ENCODE measurements at regions of chr17 and their contacts with region 1.

Region 1: GRCh38 chr17:42112552-42113176 is at the start of gene DHX58:
- DNase-seq: peak; percentile 79

Region 2: GRCh38 chr17:41724476-41725050 is 388.1 kb before region 1 on chr17:
- in situ Hi-C with region 1: no loop called
- DNase-seq: no peak

Region 3: DNA sequence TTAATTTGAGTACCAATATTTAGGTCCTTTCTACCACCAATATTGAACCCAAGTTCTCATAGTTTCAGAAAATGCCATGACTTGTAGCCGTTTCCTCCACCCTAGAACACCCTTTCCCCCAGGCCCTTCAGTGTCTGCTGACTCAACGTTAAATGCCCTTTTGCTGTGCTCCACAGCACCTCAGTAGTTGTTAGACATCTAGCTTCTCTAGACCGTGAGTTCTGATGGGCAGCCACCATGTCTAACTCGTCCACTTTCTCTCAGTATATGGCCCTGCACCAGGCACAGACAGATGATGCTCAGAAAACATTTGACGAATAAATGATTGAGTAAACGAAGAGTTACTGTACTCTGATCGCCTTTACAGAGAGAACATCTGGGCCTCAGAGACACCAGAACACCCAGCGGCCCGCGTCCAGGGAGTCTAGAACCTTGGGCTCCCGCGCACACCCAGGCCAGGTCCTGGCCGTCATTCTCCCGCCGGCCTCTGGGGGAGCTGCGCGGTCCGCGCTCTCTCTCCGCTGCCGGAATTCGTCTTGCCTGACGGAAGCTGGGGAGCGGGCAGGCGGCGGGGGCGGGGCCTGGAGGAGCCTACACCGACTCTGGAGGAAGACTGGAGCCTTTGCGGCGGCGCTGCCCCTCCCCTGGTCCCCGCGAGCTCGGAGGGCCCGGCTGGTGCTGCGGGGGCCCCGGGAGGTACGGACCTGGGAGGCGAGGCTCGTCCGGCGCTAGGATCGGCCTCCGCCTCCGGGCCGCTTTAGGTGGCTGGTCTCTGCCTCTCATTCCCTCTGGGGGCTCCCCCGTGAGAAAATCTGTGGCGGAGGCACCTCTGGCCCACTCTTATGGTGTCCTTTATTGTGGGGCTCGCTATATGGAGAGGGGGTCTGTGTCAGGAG is 92.9 kb before region 1 on chr17 and contains the start of gene NKIRAS2:
- in situ Hi-C with region 1: loop called (anchors 10 kb)
- DNase-seq: peak; percentile 92